CD4-positive, alpha-beta memory T cell (primary cell): ENCODE measurements at regions of chr11 and their contacts with region 1.

Region 1: DNA sequence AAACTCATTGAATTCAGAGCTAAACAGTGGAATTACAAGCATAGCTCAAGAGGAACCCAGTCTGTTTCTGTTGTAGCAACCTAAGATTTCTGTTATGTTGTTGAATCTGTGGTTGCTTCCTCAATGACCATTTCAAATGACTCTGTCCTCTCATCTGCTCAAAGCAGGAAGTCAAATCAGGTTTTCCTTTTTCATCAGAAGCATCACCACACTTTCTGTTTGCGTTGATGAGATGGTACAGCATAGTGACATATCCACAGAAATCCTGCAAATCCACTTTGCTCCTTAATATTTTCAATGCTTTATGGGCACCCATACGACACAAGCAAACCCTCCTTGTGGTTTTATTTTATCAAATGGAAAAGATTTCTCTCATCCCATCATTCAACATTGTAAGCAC is 12.6 kb upstream of the UCP2 start:
- DNase-seq: peak; percentile 69 to 90 (median 87)
- H3K4me3 ChIP-seq: peak overlapping the region; percentile 8 to 25
- H3K4me3 Mint-ChIP-seq: peak overlapping the region; percentile 68 to 88 (median 82)
- H3K27ac ChIP-seq: peak overlapping the region; percentile 81
- H3K27ac Mint-ChIP-seq: peak overlapping the region; percentile 96 to 99 (median 98)
- H3K4me1 ChIP-seq: peaks cover 86% of the 10 kb centered on the region
- H3K4me1 Mint-ChIP-seq: peaks cover 48 to 83% (median 64%) of the 10 kb centered on the region in 4 donors
- H3K27me3 ChIP-seq: no peaks in the 10 kb centered on the region
- H3K27me3 Mint-ChIP-seq: no peaks in the 10 kb centered on the region

Region 2: DNA sequence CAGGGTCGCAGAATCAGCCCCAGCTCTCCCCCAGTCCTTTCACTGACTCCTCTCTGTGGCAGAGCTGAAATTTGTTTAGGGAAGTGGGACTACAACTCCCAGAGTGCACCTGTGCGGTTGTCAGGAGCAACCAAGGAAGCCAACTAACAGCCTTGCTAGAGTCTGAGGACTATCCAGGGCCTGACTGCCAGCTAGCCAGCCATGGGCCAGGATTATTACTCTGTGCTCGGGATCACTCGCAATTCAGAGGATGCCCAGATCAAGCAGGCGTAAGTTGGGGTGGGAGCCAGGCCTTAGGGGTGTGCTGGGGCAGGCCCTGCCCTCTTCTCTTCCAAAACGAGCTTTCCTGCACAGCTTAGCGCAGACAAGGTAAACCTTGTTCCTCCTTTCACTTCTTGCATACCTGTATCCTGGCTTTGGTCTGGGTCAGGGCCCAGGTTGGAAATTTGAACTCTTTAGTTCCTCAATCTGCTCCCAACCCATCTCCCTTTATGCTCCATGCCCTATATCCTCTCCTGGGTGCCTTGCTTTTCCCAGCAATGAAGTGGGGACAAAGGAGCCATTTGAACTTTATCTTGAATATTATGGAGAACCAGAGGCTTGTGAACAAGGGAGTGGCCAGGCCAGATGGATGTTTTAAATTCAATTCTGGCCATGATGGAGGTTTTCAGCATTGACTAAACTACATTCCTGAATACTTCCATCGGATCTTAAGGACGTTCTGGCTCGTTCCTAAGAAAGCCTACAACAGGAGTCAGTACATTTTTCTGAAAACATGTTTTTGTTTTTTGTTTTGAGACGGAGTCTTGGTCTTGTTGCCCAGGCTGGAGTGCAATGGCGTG is 44.2 kb before region 1 on chr11 and contains the start of gene DNAJB13:
- CTCF ChIA-PET with region 1: no interaction called
- POLR2A ChIA-PET with region 1: no interaction called
- intact Hi-C with region 1: no loop called
- DNase-seq: no peak
- H3K4me3 ChIP-seq: no peak within 1 kb of the TSS
- H3K4me3 Mint-ChIP-seq: no peak within 1 kb of the TSS
- H3K27ac ChIP-seq: no peak within 1 kb of the TSS
- H3K27ac Mint-ChIP-seq: no peak within 1 kb of the TSS
- H3K4me1 ChIP-seq: no peaks in the 10 kb centered on the region
- H3K4me1 Mint-ChIP-seq: no peaks in the 10 kb centered on the region
- H3K27me3 ChIP-seq: no peaks in the 10 kb centered on the region
- H3K27me3 Mint-ChIP-seq: peaks cover 3 to 5% of the 10 kb centered on the region in 2 donors
- total RNA-seq, gene DNAJB13: 0.23 to 0.30 TPM

Region 3: DNA sequence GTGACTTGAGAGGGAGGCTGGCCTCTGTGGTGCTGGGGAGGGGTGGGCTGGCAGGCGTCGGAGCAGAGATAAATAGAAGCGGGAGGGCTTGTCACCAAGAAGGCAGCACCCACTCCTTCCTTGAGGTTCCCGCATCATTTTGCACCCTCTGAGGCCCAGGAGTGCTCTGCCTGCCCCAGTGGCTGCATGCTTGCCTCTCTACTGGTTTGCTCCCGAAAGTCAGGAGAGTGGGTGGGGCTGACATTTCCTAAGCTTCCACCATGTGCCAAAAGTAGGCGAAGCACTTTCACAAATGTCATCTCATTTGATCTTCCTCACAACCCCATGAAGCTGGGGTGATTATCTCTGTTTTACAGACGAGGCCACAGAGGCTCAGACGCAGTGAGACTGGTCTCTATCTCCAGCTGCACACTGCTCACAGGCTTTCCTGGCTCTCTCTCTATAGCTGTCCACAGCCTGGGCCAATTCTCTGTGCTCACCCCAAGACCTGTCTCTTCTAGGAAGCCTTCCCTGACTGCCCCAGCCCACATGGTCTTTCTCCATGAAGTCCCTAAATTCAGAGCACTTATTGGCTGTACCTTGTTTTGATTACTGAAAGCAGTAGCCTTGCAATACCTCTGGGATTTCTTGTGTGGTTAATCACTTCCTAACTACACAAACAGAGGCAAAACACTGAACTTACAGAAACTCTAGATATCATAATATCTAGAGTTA is 16.3 kb after region 1 on chr11:
- CTCF ChIA-PET with region 1: interaction called, 5 read pairs
- POLR2A ChIA-PET with region 1: interaction called, 2,221 read pairs
- intact Hi-C with region 1: loop called (anchors 2 kb)
- DNase-seq: peak; percentile 62 to 76 (median 69)
- H3K4me3 ChIP-seq: peak overlapping the region; percentile 10 to 39
- H3K4me3 Mint-ChIP-seq: peak overlapping the region; percentile 41 to 87 (median 68)
- H3K27ac ChIP-seq: peak overlapping the region; percentile 73
- H3K27ac Mint-ChIP-seq: peak overlapping the region; percentile 94 to 99 (median 96)
- H3K4me1 ChIP-seq: peaks cover 100% of the 10 kb centered on the region
- H3K4me1 Mint-ChIP-seq: peaks cover 27 to 95% (median 77%) of the 10 kb centered on the region in 4 donors
- H3K27me3 ChIP-seq: no peaks in the 10 kb centered on the region
- H3K27me3 Mint-ChIP-seq: no peaks in the 10 kb centered on the region

Region 4: DNA sequence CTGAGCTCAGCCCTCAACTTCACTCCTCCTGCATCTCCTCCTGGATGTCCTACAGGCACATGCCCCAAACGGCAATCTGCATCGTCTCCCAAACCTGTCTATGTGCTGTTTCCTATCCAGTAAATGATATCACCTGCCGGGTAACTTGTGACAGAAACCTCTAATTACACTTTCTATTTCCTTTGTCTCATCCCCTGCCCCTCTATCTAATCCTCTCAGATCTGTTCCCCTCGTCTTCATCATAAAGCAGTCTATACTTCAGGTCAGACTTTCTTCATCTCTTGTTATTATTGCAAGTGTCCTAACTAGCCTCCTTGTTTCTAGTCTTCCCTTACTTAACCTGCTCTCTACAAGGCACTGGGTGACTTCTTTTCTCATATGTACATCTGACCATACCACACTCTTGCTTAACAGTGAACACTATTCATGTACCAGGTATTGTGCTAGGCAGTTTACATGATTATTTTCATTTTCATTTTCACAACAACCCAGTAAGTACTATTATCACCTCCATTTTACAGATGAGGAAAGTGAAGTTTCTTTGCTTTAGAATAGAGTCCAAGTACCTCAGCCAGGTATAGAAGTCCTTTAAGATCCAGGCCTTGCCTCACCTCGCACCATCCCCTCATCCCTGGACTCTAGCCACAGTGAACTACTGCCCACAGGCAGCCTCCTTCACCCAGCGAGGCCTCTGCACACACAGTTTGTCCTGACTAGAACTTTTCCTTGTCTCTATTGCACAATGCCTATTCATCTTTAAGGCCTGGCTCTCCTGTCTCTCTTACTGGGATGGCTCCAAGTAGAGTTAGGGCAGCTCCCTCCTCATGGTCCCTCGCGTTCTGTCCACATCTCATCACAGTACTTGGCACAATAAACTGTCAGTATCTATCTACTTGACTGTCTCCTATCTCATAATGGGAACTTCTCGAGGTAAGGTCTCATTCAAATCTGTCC is 35.8 kb after region 1 on chr11:
- CTCF ChIA-PET with region 1: interaction called, 7 read pairs
- POLR2A ChIA-PET with region 1: interaction called, 10 read pairs
- intact Hi-C with region 1: no loop called
- DNase-seq: no peak
- H3K4me3 ChIP-seq: no peak overlapping the region
- H3K4me3 Mint-ChIP-seq: peak overlapping the region; percentile 54 to 83 (median 70)
- H3K27ac ChIP-seq: peak overlapping the region; percentile 50
- H3K27ac Mint-ChIP-seq: peak overlapping the region; percentile 49 to 94 (median 91)
- H3K4me1 ChIP-seq: peaks cover 29% of the 10 kb centered on the region
- H3K4me1 Mint-ChIP-seq: peaks cover 30 to 48% (median 36%) of the 10 kb centered on the region in 4 donors
- H3K27me3 ChIP-seq: no peaks in the 10 kb centered on the region
- H3K27me3 Mint-ChIP-seq: no peaks in the 10 kb centered on the region